CD4-positive, alpha-beta memory T cell (primary cell): ENCODE measurements at regions of chr10 and their contacts with region 1.

Region 1: GRCh38 chr10:80662577-80663261 is 125.0 kb downstream of the SH2D4B start:
- DNase-seq: peak; percentile 37 to 58 (median 49)
- H3K4me3 ChIP-seq: no peak overlapping the region
- H3K4me3 Mint-ChIP-seq: peak overlapping the region in 5 of 8 donors; percentile 27 to 70 (median 46)
- H3K27ac ChIP-seq: no peak overlapping the region
- H3K27ac Mint-ChIP-seq: no peak overlapping the region
- H3K4me1 ChIP-seq: peaks cover 5% of the 10 kb centered on the region
- H3K4me1 Mint-ChIP-seq: peaks cover 0 to 4% (median 3%) of the 10 kb centered on the region in 4 donors
- H3K27me3 ChIP-seq: no peaks in the 10 kb centered on the region
- H3K27me3 Mint-ChIP-seq: peaks cover 13 to 16% of the 10 kb centered on the region in 2 donors

Region 2: GRCh38 chr10:80512031-80512526 is 150.6 kb before region 1 on chr10:
- CTCF ChIA-PET with region 1: no interaction called
- POLR2A ChIA-PET with region 1: no interaction called
- intact Hi-C with region 1: no loop called
- DNase-seq: no peak
- H3K4me3 ChIP-seq: no peak overlapping the region
- H3K4me3 Mint-ChIP-seq: peak overlapping the region in 1 of 8 donors; percentile 35
- H3K27ac ChIP-seq: peak overlapping the region; percentile 35
- H3K27ac Mint-ChIP-seq: peak overlapping the region in 5 of 7 donors; percentile 70 to 95 (median 82)
- H3K4me1 ChIP-seq: peaks cover 7% of the 10 kb centered on the region
- H3K4me1 Mint-ChIP-seq: peaks cover 16 to 35% (median 23%) of the 10 kb centered on the region in 4 donors
- H3K27me3 ChIP-seq: no peaks in the 10 kb centered on the region
- H3K27me3 Mint-ChIP-seq: no peaks in the 10 kb centered on the region

Region 3: DNA sequence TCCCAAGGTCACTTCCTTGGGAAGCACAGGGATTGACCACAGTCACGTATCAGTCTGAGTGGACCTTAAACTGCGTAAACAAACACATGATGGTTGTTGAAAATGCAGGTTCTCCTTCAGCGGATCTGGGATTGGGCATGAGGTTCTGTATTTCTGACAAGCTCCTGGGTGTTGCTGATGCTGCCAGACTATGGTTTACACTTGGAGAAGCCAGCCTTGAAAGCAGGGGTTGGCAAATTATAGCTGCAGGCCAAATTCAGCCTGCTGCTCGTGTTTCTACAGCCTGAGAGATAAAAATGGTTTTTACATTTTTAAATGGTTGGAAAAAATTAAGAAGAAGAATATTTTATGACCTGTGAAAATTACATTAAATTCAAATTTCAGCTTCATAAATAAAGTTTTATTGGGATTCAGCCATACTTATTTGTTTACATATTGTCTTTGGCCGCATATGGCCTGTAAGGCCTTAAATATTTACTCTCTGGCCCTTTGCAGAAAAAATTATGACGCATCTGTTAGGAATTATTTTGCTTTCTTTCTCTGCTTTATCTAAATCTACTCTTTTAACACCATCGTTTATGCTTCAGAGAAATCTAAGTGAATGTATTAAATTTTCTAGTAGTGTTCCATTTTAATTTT is 15.4 kb before region 1 on chr10:
- CTCF ChIA-PET with region 1: interaction called, 32 read pairs
- POLR2A ChIA-PET with region 1: no interaction called
- intact Hi-C with region 1: no loop called
- DNase-seq: no peak
- H3K4me3 ChIP-seq: no peak overlapping the region
- H3K4me3 Mint-ChIP-seq: no peak overlapping the region
- H3K27ac ChIP-seq: no peak overlapping the region
- H3K27ac Mint-ChIP-seq: no peak overlapping the region
- H3K4me1 ChIP-seq: no peaks in the 10 kb centered on the region
- H3K4me1 Mint-ChIP-seq: no peaks in the 10 kb centered on the region
- H3K27me3 ChIP-seq: no peaks in the 10 kb centered on the region
- H3K27me3 Mint-ChIP-seq: peaks cover 12 to 19% of the 10 kb centered on the region in 2 donors

Region 4: GRCh38 chr10:80684259-80684658 is 21.5 kb after region 1 on chr10:
- CTCF ChIA-PET with region 1: interaction called, 18 read pairs
- POLR2A ChIA-PET with region 1: no interaction called
- intact Hi-C with region 1: no loop called
- DNase-seq: peak; percentile 42 to 58 (median 51)
- H3K4me3 ChIP-seq: no peak overlapping the region
- H3K4me3 Mint-ChIP-seq: no peak overlapping the region
- H3K27ac ChIP-seq: no peak overlapping the region
- H3K27ac Mint-ChIP-seq: no peak overlapping the region
- H3K4me1 ChIP-seq: no peaks in the 10 kb centered on the region
- H3K4me1 Mint-ChIP-seq: peaks cover 0 to 1% (median 0%) of the 10 kb centered on the region in 4 donors
- H3K27me3 ChIP-seq: no peaks in the 10 kb centered on the region
- H3K27me3 Mint-ChIP-seq: peaks cover 0 to 1% of the 10 kb centered on the region in 2 donors

Region 5: GRCh38 chr10:80964955-80965614 is 302.4 kb after region 1 on chr10:
- CTCF ChIA-PET with region 1: no interaction called
- POLR2A ChIA-PET with region 1: no interaction called
- intact Hi-C with region 1: no loop called
- DNase-seq: no peak
- H3K4me3 ChIP-seq: no peak overlapping the region
- H3K4me3 Mint-ChIP-seq: no peak overlapping the region
- H3K27ac ChIP-seq: no peak overlapping the region
- H3K27ac Mint-ChIP-seq: no peak overlapping the region
- H3K4me1 ChIP-seq: no peaks in the 10 kb centered on the region
- H3K4me1 Mint-ChIP-seq: peaks cover 0 to 3% (median 0%) of the 10 kb centered on the region in 4 donors
- H3K27me3 ChIP-seq: no peaks in the 10 kb centered on the region
- H3K27me3 Mint-ChIP-seq: peaks cover 0 to 4% of the 10 kb centered on the region in 2 donors